ENCODE measurements at regions of chr11 and their contacts with region 1.

Region 1: DNA sequence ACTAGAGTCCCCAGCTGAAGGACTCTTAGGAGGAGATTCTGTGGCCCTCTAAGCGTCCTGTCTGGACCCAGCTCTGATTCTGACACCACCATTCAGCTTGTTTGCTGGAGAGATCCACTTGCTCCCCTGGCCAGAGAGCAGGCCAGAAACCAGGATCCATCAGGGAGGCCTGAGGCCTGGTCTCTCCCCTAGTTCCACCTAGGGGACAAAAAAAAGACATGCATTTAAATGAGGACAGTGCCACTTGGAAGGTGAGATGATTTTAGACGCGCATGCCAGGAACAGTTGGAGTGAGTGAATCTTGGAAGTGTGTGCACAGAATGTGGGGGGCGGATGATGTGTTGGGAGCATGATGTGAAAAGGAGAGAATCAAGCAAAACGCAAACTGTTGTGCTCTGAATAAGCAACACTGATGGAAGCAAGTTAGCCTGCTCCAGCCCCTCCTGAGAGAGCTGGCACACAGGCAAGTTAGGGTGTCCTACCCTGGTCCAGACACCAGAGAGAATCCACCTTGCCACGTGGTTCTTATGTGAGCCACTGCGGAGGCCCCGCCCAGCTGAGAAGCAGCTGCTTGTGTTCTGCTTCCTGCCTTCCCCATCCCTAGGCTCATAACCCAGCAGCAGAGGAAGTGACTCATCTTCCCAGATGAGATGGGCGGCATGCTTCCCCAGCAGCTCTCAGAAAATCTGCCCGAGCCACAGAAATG is 8.0 kb upstream of the SLCO2B1 start:
- DNase-seq: peak; percentile 92
- H3K4me3 Mint-ChIP-seq: no peak overlapping the region
- H3K27ac Mint-ChIP-seq: peak overlapping the region; percentile 86
- H3K4me1 Mint-ChIP-seq: peaks cover 27% of the 10 kb centered on the region
- H3K27me3 Mint-ChIP-seq: no peaks in the 10 kb centered on the region

Region 2: GRCh38 chr11:74948898-74949747 is 193.7 kb before region 1 on chr11 and contains the starts of genes SPCS2 and XRRA1:
- CTCF ChIA-PET with region 1: no interaction called
- intact Hi-C with region 1: loop called (anchors 1 kb)
- DNase-seq: peak; percentile 100
- H3K4me3 Mint-ChIP-seq: peak within 1 kb of the TSS; percentile 98
- H3K27ac Mint-ChIP-seq: peak within 1 kb of the TSS; percentile 89
- H3K4me1 Mint-ChIP-seq: peaks cover 36% of the 10 kb centered on the region
- H3K27me3 Mint-ChIP-seq: no peaks in the 10 kb centered on the region
- total RNA-seq, gene SPCS2: 77.6 to 83.3 TPM
- total RNA-seq, gene XRRA1: 5.0 to 9.5 TPM

Region 3: GRCh38 chr11:75100314-75100713 is 42.6 kb before region 1 on chr11:
- CTCF ChIA-PET with region 1: no interaction called
- intact Hi-C with region 1: loop called (anchors 2 kb)
- DNase-seq: peak; percentile 80
- H3K4me3 Mint-ChIP-seq: no peak overlapping the region
- H3K27ac Mint-ChIP-seq: no peak overlapping the region
- H3K4me1 Mint-ChIP-seq: peaks cover 16% of the 10 kb centered on the region
- H3K27me3 Mint-ChIP-seq: peaks cover 36% of the 10 kb centered on the region

Region 4: DNA sequence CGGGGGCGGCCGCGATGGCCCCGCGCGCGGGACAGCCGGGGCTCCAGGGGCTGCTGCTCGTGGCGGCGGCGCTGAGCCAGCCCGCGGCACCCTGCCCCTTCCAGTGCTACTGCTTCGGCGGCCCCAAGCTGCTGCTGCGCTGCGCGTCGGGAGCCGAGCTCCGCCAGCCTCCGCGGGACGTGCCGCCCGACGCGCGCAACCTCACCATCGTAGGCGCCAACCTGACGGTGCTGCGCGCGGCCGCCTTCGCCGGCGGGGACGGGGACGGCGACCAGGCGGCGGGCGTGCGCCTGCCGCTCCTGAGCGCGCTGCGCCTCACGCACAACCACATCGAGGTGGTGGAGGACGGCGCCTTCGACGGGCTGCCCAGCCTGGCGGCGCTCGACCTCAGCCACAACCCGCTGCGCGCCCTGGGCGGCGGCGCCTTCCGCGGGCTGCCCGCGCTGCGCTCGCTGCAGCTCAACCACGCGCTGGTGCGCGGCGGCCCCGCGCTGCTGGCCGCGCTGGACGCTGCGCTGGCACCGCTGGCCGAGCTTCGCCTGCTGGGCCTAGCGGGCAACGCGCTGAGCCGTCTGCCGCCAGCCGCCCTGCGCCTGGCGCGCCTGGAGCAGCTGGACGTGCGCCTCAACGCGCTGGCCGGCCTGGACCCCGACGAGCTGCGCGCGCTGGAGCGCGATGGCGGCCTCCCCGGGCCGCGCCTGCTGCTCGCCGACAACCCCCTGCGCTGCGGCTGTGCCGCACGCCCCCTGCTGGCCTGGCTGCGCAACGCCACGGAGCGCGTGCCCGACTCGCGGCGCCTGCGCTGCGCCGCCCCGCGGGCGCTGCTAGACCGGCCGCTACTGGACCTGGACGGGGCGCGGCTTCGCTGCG is 98.4 kb after region 1 on chr11:
- CTCF ChIA-PET with region 1: interaction called, 445 read pairs
- intact Hi-C with region 1: loop called (anchors 1 kb)
- DNase-seq: peak; percentile 86
- H3K4me3 Mint-ChIP-seq: peak overlapping the region; percentile 63
- H3K27ac Mint-ChIP-seq: no peak overlapping the region
- H3K4me1 Mint-ChIP-seq: peaks cover 10% of the 10 kb centered on the region
- H3K27me3 Mint-ChIP-seq: peaks cover 33% of the 10 kb centered on the region

Region 5: DNA sequence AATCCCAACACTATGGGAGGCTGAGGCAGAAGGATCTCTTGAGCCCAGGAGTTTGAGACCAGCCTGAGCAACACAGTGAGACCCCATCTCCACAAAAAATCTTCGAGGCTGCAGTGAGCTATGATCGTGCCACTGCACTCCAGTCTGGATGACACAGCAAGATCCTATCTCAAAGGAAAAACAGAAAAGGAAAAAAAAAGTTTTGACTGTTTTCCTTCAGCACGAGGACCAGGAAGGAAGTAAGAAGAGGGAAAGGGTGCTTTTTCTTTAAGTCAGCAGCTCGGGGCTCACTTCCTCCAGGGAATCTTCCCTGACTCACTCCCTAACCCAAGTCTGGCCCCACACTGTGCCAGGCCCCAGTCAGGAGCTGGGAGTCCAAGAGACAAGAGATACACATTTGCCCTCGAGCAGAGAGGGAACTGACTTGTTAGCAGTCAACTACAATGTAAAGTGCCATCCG is 194.4 kb after region 1 on chr11:
- CTCF ChIA-PET with region 1: interaction called, 4 read pairs
- intact Hi-C with region 1: loop called (anchors 5 kb)
- DNase-seq: no peak
- H3K4me3 Mint-ChIP-seq: no peak overlapping the region
- H3K27ac Mint-ChIP-seq: peak overlapping the region; percentile 92
- H3K4me1 Mint-ChIP-seq: peaks cover 92% of the 10 kb centered on the region
- H3K27me3 Mint-ChIP-seq: no peaks in the 10 kb centered on the region